ENCODE measurements at regions of chr1 and their contacts with region 1.

Region 1: DNA sequence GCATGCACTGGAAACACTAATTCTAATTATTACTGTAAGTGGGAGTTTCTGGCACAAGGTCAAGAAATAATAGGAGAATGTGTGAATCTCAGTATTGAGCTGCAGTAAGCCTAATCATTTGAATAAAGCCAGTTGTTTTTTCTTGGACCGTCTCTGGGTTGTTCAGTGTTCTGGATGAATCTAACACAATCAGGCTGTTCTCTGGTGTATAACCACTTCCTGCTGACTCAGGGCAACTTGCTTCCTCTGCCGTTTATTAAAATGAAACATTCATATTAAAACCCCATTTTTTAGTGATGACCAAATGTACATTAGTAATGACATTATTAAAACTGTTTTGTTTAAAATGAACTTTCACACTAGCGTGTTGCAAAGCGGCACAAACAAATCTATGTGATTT is 273.1 kb upstream of the SNX7 start:
- DNase-seq: no peak
- H3K4me3 Mint-ChIP-seq: peak overlapping the region; percentile 12
- H3K27ac Mint-ChIP-seq: no peak overlapping the region
- H3K4me1 Mint-ChIP-seq: peaks cover 30% of the 10 kb centered on the region
- H3K27me3 Mint-ChIP-seq: no peaks in the 10 kb centered on the region

Region 2: DNA sequence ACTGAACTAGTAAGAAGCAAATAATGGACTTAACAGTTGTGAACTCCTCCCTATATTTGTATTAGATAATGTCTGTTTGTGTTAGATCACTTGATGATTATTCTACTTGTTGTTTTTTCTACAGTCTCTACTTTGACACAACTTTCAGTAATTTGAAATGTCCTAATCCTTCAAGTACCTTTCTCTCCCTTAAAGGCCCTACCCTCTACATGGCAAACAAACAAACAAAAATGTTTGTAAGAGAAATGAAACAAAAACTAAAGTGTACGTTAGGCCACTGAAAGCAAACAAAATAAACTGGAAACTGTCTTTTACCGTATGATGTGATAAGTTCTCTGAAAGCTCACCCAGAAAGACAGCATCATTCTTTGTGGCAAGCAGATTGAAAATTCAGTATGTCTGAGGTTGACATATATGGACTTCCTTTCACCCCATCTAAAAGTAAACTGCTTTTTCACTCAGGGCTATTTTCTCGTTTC is 17.2 kb after region 1 on chr1:
- intact Hi-C with region 1: loop called (anchors 2 kb)
- DNase-seq: no peak
- H3K4me3 Mint-ChIP-seq: peak overlapping the region; percentile 75
- H3K27ac Mint-ChIP-seq: peak overlapping the region; percentile 87
- H3K4me1 Mint-ChIP-seq: peaks cover 52% of the 10 kb centered on the region
- H3K27me3 Mint-ChIP-seq: peaks cover 2% of the 10 kb centered on the region